ENCODE measurements at regions of chr11 and their contacts with region 1.

Region 1: GRCh38 chr11:34600339-34601084 is 20.4 kb upstream of the EHF start:
- DNase-seq: no peak
- H3K4me3 ChIP-seq: no peak overlapping the region
- H3K27ac ChIP-seq: peak overlapping the region; percentile 32
- H3K27me3 ChIP-seq: no peaks in the 10 kb centered on the region
- CTCF ChIP-seq: 0 out of 2 replicates have a peak, but pooled peaks have one; percentile 8

Region 2: DNA sequence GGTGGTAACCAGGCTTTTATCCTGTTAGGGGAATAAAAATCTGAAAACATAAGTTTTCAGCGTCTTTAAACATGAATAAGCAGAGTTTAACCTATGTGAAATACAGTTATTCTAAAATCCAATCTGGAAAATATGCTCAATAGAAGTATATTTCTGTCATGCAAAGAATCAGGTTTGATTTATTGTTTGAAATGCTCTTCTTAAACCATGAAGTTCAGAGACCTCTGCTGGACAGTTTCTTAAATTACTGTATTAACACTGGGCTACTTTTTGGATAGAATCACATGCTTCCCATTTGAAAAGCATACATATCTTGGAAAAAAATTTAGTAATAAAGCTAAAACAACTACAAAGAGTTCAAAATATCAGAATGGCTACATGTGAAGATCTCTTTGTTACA is 290.3 kb after region 1 on chr11:
- CTCF ChIA-PET with region 1: interaction called, 16 read pairs
- POLR2A ChIA-PET with region 1: no interaction called
- DNase-seq: peak; percentile 3
- H3K4me3 ChIP-seq: no peak overlapping the region
- H3K27ac ChIP-seq: no peak overlapping the region
- H3K27me3 ChIP-seq: no peaks in the 10 kb centered on the region
- CTCF ChIP-seq: peak; percentile 56

Measured in AG04450 (cell line).